ENCODE measurements at regions of chr10 and their contacts with region 1.

Region 1: GRCh38 chr10:6202684-6203330 is at the start of gene PFKFB3:
- DNase-seq: peak; percentile 82 to 99
- H3K4me3 ChIP-seq: peak within 1 kb of the TSS; percentile 63 to 92 (median 80)
- H3K27ac ChIP-seq: peak within 1 kb of the TSS; percentile 91
- H3K4me1 ChIP-seq: peaks cover 3 to 10% (median 7%) of the 10 kb centered on the region in 4 experiments
- H3K27me3 ChIP-seq: peaks cover 19 to 37% (median 33%) of the 10 kb centered on the region in 4 experiments; a peak in 6 of 7 replicates
- CTCF ChIP-seq: peak; percentile 85 to 91 (median 88)
- EP300 ChIP-seq: peak in 1 of 2 experiments; percentile 77; a peak in 1 of 3 replicates
- POLR2A ChIP-seq: peak; percentile 100
- RAD21 ChIP-seq: peak; percentile 72 to 78
- total RNA-seq, gene PFKFB3: 27.3 and 32.0 TPM in 2 replicates

Region 2: GRCh38 chr10:6088721-6089390 is 114.0 kb before region 1 on chr10 and contains the start of gene RBM17:
- CTCF ChIA-PET with region 1: interaction called, 12 read pairs
- POLR2A ChIA-PET with region 1: interaction called, 12 read pairs
- DNase-seq: peak; percentile 95 to 100
- H3K4me3 ChIP-seq: peak within 1 kb of the TSS; percentile 88 to 94 (median 92)
- H3K27ac ChIP-seq: peak within 1 kb of the TSS; percentile 74; the same call in 1 of the 2 replicates
- H3K4me1 ChIP-seq: peaks cover 0 to 12% (median 7%) of the 10 kb centered on the region in 4 experiments; a peak in 4 of 7 replicates
- H3K27me3 ChIP-seq: no peaks in the 10 kb centered on the region
- CTCF ChIP-seq: peak; percentile 100
- EP300 ChIP-seq: 0 out of 3 replicates have a peak, but pooled peaks of 1 of the 2 experiments have one; percentile 80
- POLR2A ChIP-seq: peak in 1 of 2 experiments; percentile 69; a peak in 2 of 3 replicates
- RAD21 ChIP-seq: peak; percentile 71 to 80
- total RNA-seq, gene RBM17: 120 and 128 TPM in 2 replicates

Region 3: GRCh38 chr10:6151087-6151977 is 51.5 kb before region 1 on chr10:
- CTCF ChIA-PET with region 1: interaction called, 16 read pairs
- POLR2A ChIA-PET with region 1: interaction called, 24 read pairs
- DNase-seq: peak; percentile 61 to 81
- H3K4me3 ChIP-seq: peak overlapping the region in 1 of 4 experiments; percentile 26; a peak in 2 of 8 replicates
- H3K27ac ChIP-seq: no peak overlapping the region
- H3K4me1 ChIP-seq: peaks cover 0 to 5% (median 4%) of the 10 kb centered on the region in 4 experiments; a peak in 6 of 7 replicates
- H3K27me3 ChIP-seq: no peaks in the 10 kb centered on the region
- CTCF ChIP-seq: peak; percentile 68 to 87 (median 76)
- EP300 ChIP-seq: no peak
- POLR2A ChIP-seq: no peak
- RAD21 ChIP-seq: peak; percentile 54 to 58

Region 4: DNA sequence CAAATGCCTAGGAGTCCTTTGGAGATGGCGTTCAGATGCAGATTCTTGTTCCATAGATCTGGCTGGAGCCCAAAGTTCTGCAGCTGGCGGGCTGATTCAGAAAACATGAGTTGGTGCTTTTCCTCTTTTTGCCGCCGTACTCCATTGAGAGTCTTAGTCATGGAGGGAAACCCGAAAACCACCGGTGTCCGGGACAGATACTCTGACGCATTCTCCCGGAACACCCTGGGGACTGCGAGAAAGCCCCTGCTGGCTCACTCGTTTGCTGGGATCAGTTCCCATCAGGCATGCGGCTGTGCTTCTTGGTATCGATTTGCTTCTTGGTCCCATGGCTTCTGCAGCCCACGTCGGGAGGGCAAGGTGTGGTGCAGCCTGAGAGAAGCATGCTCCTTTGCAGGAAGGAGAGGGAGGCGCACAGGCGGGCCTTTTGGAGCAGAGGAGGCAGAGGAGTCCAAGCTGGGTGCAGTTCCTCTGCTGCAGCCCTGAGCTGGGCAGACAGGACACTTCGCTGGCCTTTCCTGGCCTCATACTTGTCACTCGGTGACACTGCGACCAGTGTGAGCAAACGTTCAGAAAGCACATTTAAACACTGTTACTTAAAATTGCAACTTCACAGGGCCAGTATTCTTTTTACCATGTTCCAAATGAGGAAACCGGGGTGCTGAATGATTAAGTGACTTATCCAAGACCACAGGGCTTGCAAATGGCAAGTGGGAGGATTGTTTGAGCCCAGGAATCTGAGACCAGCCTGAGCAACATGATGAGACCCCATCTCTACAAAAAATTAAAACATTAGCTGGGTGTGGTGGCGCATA is 30.7 kb before region 1 on chr10:
- CTCF ChIA-PET with region 1: interaction called, 27 read pairs
- POLR2A ChIA-PET with region 1: interaction called, 17 read pairs
- DNase-seq: no peak
- H3K4me3 ChIP-seq: no peak overlapping the region
- H3K27ac ChIP-seq: no peak overlapping the region
- H3K4me1 ChIP-seq: no peaks in the 10 kb centered on the region
- H3K27me3 ChIP-seq: no peaks in the 10 kb centered on the region
- CTCF ChIP-seq: no peak
- EP300 ChIP-seq: no peak
- POLR2A ChIP-seq: no peak
- RAD21 ChIP-seq: no peak

Region 5: DNA sequence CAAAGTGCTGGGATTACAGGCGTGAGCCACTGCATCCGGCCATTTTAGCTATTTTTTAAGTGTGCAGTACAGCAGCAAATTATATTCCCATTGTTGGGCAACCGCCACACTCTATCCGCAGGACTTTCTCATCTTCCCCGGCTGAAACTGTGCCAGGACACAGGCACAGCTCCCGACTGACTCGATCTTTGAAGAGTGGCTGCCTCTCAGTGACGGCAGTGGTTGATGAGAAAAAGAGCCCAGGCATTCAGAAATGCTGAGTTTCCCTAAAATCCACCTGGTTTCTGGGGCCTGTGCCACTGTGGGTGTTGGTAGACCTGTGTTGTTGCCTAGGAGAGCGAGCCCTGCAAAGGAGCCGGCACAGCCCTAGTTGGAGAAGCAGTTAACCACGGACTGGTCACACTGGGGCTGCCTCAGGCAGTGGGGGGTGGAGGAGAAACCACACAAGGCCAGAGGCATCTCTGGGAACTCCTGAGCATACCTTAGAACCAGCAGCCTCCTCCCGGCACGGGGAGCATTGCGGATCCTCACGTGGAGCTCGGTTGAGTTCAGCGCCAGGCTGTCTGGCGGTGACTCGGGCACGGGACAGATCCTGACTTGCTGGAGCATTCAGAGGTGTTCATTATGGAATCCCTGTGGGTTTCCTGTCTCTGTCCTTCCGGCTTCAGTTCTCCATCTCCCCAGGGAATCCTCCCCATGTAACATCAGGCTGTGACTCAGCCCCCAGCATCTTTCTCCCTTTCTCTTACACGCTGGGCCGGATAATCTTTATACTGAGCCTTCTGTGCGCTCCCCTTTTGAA is 16.1 kb after region 1 on chr10:
- CTCF ChIA-PET with region 1: interaction called, 7 read pairs
- POLR2A ChIA-PET with region 1: interaction called, 15 read pairs
- DNase-seq: no peak
- H3K4me3 ChIP-seq: no peak overlapping the region
- H3K27ac ChIP-seq: no peak overlapping the region
- H3K4me1 ChIP-seq: no peaks in the 10 kb centered on the region; a peak in 1 of 7 replicates
- H3K27me3 ChIP-seq: no peaks in the 10 kb centered on the region
- CTCF ChIP-seq: no peak
- EP300 ChIP-seq: no peak
- POLR2A ChIP-seq: no peak
- RAD21 ChIP-seq: no peak

Region 6: DNA sequence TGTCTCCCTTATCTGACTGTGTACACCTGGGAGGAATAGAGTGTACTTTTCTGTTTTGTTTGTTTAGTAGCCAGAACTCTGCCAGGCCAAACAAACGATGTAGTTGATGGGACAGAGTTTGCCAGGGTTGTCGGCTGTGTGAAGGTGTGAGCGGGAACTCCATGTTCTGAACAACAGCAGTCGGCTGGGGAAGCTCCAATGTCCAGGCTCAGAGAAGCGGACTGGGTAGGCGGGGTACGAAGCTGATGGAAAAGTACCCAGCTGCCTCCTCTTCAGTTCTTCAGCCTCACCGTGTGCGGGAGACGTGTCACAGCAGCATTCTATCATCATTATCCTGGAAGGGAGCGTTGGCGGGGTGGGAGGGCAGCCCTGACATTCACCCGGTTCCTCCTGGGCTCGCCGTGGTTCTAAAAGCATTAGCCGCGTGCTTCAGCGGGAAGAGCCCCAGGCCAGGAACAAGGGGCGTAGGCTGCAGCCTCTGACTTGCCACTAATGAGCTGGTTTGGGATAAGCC is 52.8 kb after region 1 on chr10:
- CTCF ChIA-PET with region 1: no interaction called
- POLR2A ChIA-PET with region 1: no interaction called
- DNase-seq: no peak
- H3K4me3 ChIP-seq: no peak overlapping the region
- H3K27ac ChIP-seq: no peak overlapping the region
- H3K4me1 ChIP-seq: no peaks in the 10 kb centered on the region
- H3K27me3 ChIP-seq: no peaks in the 10 kb centered on the region
- CTCF ChIP-seq: no peak
- EP300 ChIP-seq: no peak
- POLR2A ChIP-seq: no peak
- RAD21 ChIP-seq: no peak

Region 7: DNA sequence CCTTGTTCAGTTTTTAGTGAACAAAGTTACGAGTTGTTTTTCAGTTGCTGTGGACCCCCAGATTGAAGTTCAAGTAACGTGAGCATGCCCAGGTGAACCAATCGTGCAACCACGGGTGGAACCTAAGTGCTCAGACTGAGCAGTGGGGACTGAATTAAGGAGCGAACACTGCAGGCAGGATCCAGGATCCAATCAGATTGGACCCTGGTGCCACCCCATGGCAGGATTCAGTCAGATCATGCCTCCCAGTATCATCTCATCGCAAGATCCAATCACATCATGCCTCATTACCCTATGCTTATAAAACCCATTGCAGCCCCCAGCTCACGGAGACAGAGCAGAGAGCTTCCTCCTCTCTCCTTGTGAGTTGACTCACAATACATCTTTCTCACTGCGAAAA is 80.8 kb after region 1 on chr10:
- CTCF ChIA-PET with region 1: no interaction called
- POLR2A ChIA-PET with region 1: no interaction called
- DNase-seq: no peak
- H3K4me3 ChIP-seq: no peak overlapping the region
- H3K27ac ChIP-seq: no peak overlapping the region
- H3K4me1 ChIP-seq: peaks cover 0 to 4% (median 2%) of the 10 kb centered on the region in 4 experiments; a peak in 2 of 7 replicates
- H3K27me3 ChIP-seq: no peaks in the 10 kb centered on the region
- CTCF ChIP-seq: no peak
- EP300 ChIP-seq: no peak
- POLR2A ChIP-seq: no peak
- RAD21 ChIP-seq: no peak

Region 8: GRCh38 chr10:6364893-6365292 is 162.1 kb after region 1 on chr10:
- CTCF ChIA-PET with region 1: interaction called, 5 read pairs
- POLR2A ChIA-PET with region 1: interaction called, 15 read pairs
- DNase-seq: no peak
- H3K4me3 ChIP-seq: no peak overlapping the region
- H3K27ac ChIP-seq: no peak overlapping the region
- H3K4me1 ChIP-seq: peaks cover 0 to 14% (median 10%) of the 10 kb centered on the region in 4 experiments; a peak in 5 of 7 replicates
- H3K27me3 ChIP-seq: no peaks in the 10 kb centered on the region
- CTCF ChIP-seq: no peak
- EP300 ChIP-seq: no peak
- POLR2A ChIP-seq: no peak
- RAD21 ChIP-seq: no peak